ENCODE measurements at regions of chr9 and their contacts with region 1.

Region 1: DNA sequence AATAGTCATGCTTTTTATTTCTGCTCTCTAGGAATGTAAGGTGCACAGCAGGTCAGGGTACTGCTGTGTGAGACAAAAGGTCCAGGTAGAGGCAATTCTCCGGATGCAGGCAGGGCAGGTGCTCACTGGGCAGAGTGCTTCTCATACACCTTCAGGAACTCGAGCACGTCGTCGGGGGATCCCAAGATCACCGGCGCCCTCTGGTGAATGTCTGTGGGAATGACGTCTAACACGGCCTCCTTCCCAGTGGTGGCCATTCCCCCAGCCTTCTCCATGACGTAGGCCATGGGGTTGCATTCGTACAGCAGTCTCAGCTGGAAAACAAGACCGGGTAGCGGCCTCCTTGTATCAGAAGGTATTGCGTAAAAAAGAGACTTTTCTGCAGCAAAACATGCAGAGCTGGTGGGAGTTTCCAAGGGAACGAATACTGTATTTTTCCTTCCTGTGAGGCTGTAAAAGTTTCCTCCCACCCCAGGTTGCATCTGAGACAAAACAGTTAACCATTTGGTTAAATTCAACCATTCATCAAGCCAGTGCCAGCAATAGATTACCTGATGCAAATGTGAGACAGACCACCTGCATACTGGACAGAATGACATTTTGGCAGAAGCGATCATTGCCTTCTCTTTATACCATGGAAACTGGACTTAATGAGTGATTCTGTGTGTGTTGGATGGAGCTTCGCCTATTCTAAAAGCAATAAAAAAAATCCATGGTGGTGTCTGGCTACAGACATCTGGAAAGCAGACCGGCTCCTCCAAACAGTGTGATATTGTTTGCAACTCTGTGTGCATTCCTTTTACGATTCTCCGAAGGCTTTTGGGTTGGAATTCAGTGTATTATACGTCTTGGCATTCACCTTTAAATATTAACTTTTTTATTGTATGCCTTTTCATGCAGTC is 9.9 kb upstream of the FBP2 start:
- DNase-seq: peak; percentile 45 to 73
- H3K4me3 ChIP-seq: no peak overlapping the region
- H3K27ac ChIP-seq: no peak overlapping the region
- H3K4me1 ChIP-seq: no peaks in the 10 kb centered on the region
- H3K27me3 ChIP-seq: no peaks in the 10 kb centered on the region
- CTCF ChIP-seq: peak; percentile 68

Region 2: GRCh38 chr9:95127249-95128176 is 524.0 kb after region 1 on chr9:
- CTCF ChIA-PET with region 1: no interaction called
- POLR2A ChIA-PET with region 1: no interaction called
- intact Hi-C with region 1: loop called (anchors 1 kb)
- DNase-seq: peak; percentile 43 to 83
- H3K4me3 ChIP-seq: no peak overlapping the region
- H3K27ac ChIP-seq: no peak overlapping the region
- H3K4me1 ChIP-seq: no peaks in the 10 kb centered on the region
- H3K27me3 ChIP-seq: no peaks in the 10 kb centered on the region
- CTCF ChIP-seq: peak; percentile 89

Region 3: DNA sequence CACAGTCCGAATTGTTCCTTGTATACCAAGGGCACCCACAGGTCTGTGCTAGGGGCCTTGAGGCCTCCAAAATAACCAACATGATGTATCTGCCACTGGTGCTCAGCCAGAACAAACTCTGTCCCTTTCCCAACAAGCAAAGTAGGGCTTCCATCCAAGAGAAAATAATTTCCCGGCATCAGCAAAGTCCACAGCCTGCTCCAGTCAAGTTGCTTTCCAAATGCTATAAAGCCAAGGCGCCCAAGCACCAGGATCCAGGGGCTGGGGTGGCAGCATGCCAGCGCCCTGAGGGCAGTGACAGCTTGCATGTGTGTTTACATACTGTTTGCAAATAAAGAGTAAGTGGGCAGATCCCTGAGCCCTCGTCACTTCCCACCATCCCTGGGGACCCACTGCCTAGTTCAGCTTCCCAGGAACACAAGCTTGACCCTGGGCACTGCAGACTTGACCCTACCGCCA is 1427.9 kb after region 1 on chr9:
- CTCF ChIA-PET with region 1: no interaction called
- POLR2A ChIA-PET with region 1: no interaction called
- intact Hi-C with region 1: no loop called
- DNase-seq: peak in 1 of 2 experiments; percentile 22
- H3K4me3 ChIP-seq: no peak overlapping the region
- H3K27ac ChIP-seq: no peak overlapping the region
- H3K4me1 ChIP-seq: no peaks in the 10 kb centered on the region
- H3K27me3 ChIP-seq: peaks cover 36% of the 10 kb centered on the region
- CTCF ChIP-seq: no peak

Measured in PC-9 (cell line).